Left colon (tissue), 2 donors: ENCODE measurements at regions of chr7 and their contacts with region 1.

Region 1: DNA sequence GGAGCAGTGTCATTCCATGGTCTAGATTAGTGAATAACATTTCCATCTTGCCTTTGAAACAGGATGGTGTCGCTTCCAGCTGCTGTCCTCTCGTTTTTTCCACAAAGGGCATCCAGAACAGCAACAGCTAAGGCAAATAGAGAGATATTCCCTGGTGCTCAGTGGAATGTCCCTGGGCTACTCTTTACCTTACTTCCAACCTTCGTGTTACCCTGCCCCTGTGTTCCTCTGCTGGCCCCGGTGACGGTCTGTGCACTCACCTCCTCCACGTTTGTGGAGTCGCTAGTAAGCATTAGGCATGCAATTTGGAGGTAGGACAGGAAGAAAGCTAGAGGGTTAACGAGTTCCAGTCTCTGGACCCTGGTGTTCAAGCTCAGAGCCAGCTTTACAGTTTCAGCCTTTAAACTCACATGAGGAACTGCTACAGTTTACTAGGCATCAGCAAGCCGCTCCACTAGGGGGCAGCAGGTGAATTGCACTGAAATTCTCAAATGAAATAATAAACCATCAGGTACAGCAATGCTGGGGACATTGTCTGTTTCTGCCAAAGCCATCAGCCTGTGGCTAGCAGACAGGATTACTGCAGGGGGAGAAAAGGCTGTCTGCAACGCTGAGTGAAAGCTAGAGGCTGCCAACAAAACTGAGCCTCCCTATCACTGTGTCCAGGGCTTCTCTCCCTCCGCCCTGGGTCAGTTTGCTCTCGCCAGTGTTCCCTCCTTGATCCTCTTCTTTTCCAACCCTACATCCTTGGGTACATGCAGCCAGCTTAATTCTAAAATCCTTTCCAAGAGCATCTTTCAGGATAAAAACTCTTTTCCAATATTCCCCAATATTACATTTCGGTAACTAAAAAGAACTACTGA is 9.0 kb downstream of the MRPL32 start:
- DNase-seq: peak; percentile 50 to 91
- ATAC-seq: peak; percentile 75

Region 2: DNA sequence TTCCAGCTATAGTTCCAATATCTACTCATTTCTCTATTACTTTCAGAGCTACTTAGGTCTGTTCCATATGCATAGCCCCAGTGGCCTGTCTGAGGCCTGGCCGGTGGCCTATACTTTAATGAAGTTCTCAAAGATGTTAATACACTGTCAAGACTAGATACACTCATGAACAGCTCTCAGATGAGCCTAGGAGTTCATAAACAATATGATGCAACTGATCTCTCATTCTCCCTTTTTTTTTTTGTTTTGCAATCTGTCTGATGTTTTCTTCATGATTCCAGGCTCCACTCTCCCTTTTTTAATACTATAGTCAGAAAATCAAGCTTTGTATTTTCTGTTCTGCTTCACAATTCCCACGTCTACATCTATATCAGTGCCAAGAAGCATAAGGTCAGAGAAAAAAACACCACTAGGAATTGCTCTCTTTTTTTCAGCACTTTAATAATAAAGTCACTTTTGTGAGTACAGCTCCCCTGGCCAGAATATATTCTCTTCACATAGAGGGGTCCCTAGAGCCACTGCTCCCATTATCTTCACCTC is 350.4 kb before region 1 on chr7:
- intact Hi-C with region 1: no loop called
- DNase-seq: no peak
- ATAC-seq: no peak

Region 3: DNA sequence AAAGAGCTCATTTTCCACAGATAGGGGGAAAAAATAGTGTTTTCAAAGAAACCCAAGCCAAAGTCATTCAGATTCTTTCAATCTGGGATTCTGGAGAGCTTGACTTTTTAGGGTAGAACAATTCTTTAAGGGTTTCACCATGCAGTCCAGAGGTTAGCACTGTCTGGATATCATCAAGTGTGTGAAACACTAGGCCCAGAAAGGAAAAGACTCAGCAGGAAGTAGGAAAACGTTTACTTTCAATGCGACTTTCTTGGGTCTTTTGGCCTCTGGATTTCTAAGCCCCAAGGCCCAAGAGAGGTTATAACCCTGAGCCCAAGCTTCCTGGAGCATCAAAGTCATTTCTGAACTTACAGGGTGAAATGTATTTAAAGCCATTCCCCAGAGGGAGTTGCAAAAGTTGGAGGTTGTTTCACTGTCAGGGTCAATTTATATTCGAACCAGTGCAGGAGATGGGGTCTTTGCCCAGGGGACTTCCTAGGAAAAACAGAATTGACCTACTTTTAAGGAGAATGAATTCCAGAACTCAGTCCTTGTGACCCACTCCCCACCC is 187.3 kb before region 1 on chr7:
- intact Hi-C with region 1: no loop called
- DNase-seq: no peak
- ATAC-seq: no peak

Region 4: GRCh38 chr7:43260980-43261878 is 320.0 kb after region 1 on chr7:
- intact Hi-C with region 1: loop called (anchors 2 to 10 kb)
- DNase-seq: peak; percentile 46 to 75
- ATAC-seq: peak; percentile 75